Activated CD4-positive, alpha-beta T cell treated with anti-CD3 and anti-CD28 coated beads, Interleukin-2, amount 10 ng/mL, durations not matched to agents 7 days and 5 days (primary cell): ENCODE measurements at regions of chr7 and their contacts with region 1.

Region 1: GRCh38 chr7:150368096-150368883 is at the start of gene REPIN1:
- DNase-seq: peak; percentile 83
- H3K4me3 Mint-ChIP-seq: peak within 1 kb of the TSS; percentile 97
- H3K27ac Mint-ChIP-seq: peak within 1 kb of the TSS; percentile 96
- H3K4me1 Mint-ChIP-seq: peaks cover 47% of the 10 kb centered on the region
- H3K27me3 Mint-ChIP-seq: no peaks in the 10 kb centered on the region
- total RNA-seq, gene REPIN1: 45.1 to 54.6 TPM

Region 2: GRCh38 chr7:150307904-150308303 is 60.4 kb before region 1 on chr7:
- CTCF ChIA-PET with region 1: no interaction called
- POLR2A ChIA-PET with region 1: no interaction called
- DNase-seq: no peak
- H3K4me3 Mint-ChIP-seq: no peak overlapping the region
- H3K27ac Mint-ChIP-seq: no peak overlapping the region
- H3K4me1 Mint-ChIP-seq: no peaks in the 10 kb centered on the region
- H3K27me3 Mint-ChIP-seq: no peaks in the 10 kb centered on the region

Region 3: DNA sequence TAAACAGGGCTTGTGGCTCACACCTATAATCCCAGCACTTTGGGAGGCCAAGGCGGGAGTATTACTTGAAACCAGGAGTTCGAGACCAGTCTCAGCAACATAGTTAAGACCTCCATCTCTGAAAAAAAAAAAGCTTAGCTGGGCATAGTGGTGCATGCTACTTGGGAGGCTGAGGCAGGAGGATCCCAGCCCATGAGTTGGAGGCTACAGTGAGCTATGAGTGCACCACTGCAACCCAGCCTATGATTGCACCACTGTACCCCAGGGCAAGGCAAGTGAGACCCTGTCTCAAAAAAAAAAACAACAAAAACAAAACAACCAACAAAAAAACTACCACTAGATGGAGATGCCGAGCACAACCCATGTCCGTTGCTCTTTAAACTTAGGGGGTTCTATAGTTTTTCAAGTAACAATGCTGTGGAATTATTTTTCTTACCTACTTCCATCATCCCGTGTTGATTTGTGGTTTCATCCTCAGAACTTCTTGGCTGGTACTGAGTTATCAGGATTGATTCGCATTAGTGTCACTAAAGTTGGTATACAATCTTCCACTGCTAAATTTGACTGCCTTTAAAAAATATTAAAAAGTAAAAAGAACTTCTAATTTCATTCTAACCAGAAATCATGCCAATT is 11.9 kb before region 1 on chr7:
- CTCF ChIA-PET with region 1: interaction called, 13 read pairs
- POLR2A ChIA-PET with region 1: no interaction called
- DNase-seq: peak; percentile 42
- H3K4me3 Mint-ChIP-seq: no peak overlapping the region
- H3K27ac Mint-ChIP-seq: peak overlapping the region; percentile 61
- H3K4me1 Mint-ChIP-seq: peaks cover 39% of the 10 kb centered on the region
- H3K27me3 Mint-ChIP-seq: peaks cover 4% of the 10 kb centered on the region